ENCODE measurements at regions of chr7 and their contacts with region 1.

Region 1: GRCh38 chr7:116211006-116211912 is 920 bp downstream of the TES start:
- DNase-seq: peak; percentile 91
- ATAC-seq: peak; percentile 76
- H3K4me3 ChIP-seq: peak overlapping the region; percentile 86
- H3K27ac ChIP-seq: peak overlapping the region; percentile 55
- H3K4me1 ChIP-seq: peaks cover 2% of the 10 kb centered on the region
- H3K27me3 ChIP-seq: no peaks in the 10 kb centered on the region
- CTCF ChIP-seq: no peak
- POLR2A ChIP-seq: peak; percentile 94
- RAD21 ChIP-seq: no peak; the same call in 1 of the 2 replicates

Region 2: GRCh38 chr7:116180302-116180701 is 31.0 kb before region 1 on chr7:
- CTCF ChIA-PET with region 1: interaction called, 3 read pairs
- POLR2A ChIA-PET with region 1: no interaction called
- dilution Hi-C with region 1: no loop called
- in situ Hi-C with region 1: no loop called
- intact Hi-C with region 1: loop called (anchors 2 kb)
- DNase-seq: peak; percentile 68
- ATAC-seq: peak; percentile 62
- H3K4me3 ChIP-seq: no peak overlapping the region
- H3K27ac ChIP-seq: no peak overlapping the region
- H3K4me1 ChIP-seq: peaks cover 3% of the 10 kb centered on the region
- H3K27me3 ChIP-seq: no peaks in the 10 kb centered on the region
- CTCF ChIP-seq: peak; percentile 82
- POLR2A ChIP-seq: no peak
- RAD21 ChIP-seq: peak; percentile 82

Region 3: GRCh38 chr7:116687801-116688201 is 476.5 kb after region 1 on chr7:
- CTCF ChIA-PET with region 1: no interaction called
- POLR2A ChIA-PET with region 1: no interaction called
- dilution Hi-C with region 1: no loop called
- in situ Hi-C with region 1: no loop called
- intact Hi-C with region 1: no loop called
- DNase-seq: peak; percentile 83
- ATAC-seq: peak; percentile 86
- H3K4me3 ChIP-seq: no peak overlapping the region
- H3K27ac ChIP-seq: peak overlapping the region; percentile 34; the same call in 1 of the 2 replicates
- H3K4me1 ChIP-seq: peaks cover 12% of the 10 kb centered on the region
- H3K27me3 ChIP-seq: no peaks in the 10 kb centered on the region
- CTCF ChIP-seq: no peak
- POLR2A ChIP-seq: no peak
- RAD21 ChIP-seq: no peak